ENCODE measurements at regions of chr2 and their contacts with region 1.

Region 1: GRCh38 chr2:232668805-232669444 is 28.2 kb upstream of the GIGYF2 start:
- DNase-seq: peak in 1 of 2 donors; percentile 33
- ATAC-seq: peak in 7 of 8 donors; percentile 46 to 84 (median 68)
- H3K4me3 ChIP-seq: no peak overlapping the region
- H3K27ac ChIP-seq: peak overlapping the region in 5 of 10 donors; percentile 4 to 83 (median 73)
- H3K4me1 ChIP-seq: peaks cover 4 to 35% (median 16%) of the 10 kb centered on the region in 9 donors
- H3K27me3 ChIP-seq: no peaks in the 10 kb centered on the region
- CTCF ChIP-seq: peak in 8 of 9 donors; percentile 10 to 72 (median 54)

Region 2: DNA sequence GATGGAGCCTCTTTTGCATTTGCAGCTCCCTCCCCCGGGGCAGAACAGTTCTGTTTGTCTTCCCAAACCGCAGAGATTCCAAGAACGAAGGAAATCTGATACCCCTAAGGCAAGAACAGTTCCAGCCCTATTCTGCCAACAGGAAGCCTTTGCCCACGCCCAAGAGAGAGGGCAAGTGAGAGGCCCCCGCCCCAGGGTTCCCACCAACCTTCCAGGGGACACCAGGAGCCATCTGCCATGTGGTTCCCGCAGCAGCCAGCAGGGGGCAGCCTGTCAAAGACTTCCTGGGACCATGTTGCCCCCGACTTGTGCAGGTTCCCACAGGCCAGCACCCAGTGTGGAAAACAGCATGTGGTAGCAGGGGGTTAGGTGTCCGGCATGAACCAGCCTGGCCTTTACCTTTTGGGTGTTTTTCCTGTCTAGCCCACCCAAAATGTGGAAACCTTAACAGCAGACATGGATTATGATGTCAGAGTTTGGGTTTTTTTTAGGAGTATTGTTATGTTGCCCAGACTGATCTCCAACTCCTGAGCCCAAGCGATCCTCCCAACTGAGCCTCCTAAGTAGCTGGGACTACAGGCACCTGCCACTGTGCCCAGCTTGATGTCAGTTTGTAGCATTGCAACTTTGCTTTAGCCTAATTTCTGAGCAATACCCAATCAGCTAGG is 57.2 kb before region 1 on chr2:
- intact Hi-C with region 1: loop called in 9 of 10 experiments (anchors 1 to 5 kb)
- DNase-seq: peak; percentile 53 to 79
- ATAC-seq: peak; percentile 38 to 77 (median 50)
- H3K4me3 ChIP-seq: no peak overlapping the region
- H3K27ac ChIP-seq: no peak overlapping the region
- H3K4me1 ChIP-seq: no peaks in the 10 kb centered on the region
- H3K27me3 ChIP-seq: no peaks in the 10 kb centered on the region
- CTCF ChIP-seq: peak; percentile 53 to 87 (median 79)

Region 3: GRCh38 chr2:232721882-232722281 is 53.0 kb after region 1 on chr2:
- intact Hi-C with region 1: loop called in 1 of 10 experiments (anchors 1 kb)
- DNase-seq: no peak
- ATAC-seq: no peak
- H3K4me3 ChIP-seq: no peak overlapping the region
- H3K27ac ChIP-seq: no peak overlapping the region
- H3K4me1 ChIP-seq: peaks cover 0 to 26% (median 16%) of the 10 kb centered on the region in 9 donors
- H3K27me3 ChIP-seq: no peaks in the 10 kb centered on the region
- CTCF ChIP-seq: no peak